ENCODE measurements at regions of chr3 and their contacts with region 1.

Region 1: GRCh38 chr3:11379233-11379823 is 107.1 kb downstream of the ATG7 start:
- DNase-seq: peak in 2 of 5 donors; percentile 7 to 39
- H3K4me3 ChIP-seq: no peak overlapping the region
- H3K4me3 Mint-ChIP-seq: no peak overlapping the region
- H3K27ac ChIP-seq: no peak overlapping the region
- H3K27ac Mint-ChIP-seq: no peak overlapping the region
- H3K4me1 ChIP-seq: no peaks in the 10 kb centered on the region
- H3K4me1 Mint-ChIP-seq: no peaks in the 10 kb centered on the region
- H3K27me3 ChIP-seq: no peaks in the 10 kb centered on the region
- H3K27me3 Mint-ChIP-seq: peaks cover 0 to 2% of the 10 kb centered on the region in 2 donors

Region 2: DNA sequence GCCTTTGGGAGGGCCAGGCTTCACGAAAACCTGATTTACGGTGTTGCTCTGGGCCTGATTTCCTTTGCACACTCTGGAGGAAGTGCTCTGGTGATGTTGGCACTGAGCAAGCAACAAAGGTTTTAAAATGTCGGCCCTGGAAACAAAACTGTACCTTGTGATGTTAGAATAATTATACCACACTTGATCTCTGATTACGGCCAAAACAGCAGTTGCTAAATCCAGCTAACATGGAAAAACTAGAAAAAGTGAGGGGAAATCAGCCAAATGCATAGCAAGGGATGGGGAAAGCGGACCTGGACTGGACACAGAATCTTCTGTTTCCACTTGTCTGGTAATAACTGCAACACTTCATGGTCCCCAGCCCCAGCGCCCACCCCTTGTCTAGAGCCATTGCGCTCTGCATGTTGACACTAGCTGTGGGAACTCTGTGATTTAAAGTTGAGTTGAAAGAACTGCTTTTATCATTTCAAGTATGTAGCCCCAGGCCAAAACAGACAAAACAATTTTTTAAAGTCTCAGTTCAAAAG is 144.3 kb after region 1 on chr3:
- CTCF ChIA-PET with region 1: no interaction called
- POLR2A ChIA-PET with region 1: no interaction called
- DNase-seq: no peak
- H3K4me3 ChIP-seq: no peak overlapping the region
- H3K4me3 Mint-ChIP-seq: no peak overlapping the region
- H3K27ac ChIP-seq: no peak overlapping the region
- H3K27ac Mint-ChIP-seq: peak overlapping the region in 1 of 8 donors; percentile 9
- H3K4me1 ChIP-seq: no peaks in the 10 kb centered on the region
- H3K4me1 Mint-ChIP-seq: no peaks in the 10 kb centered on the region
- H3K27me3 ChIP-seq: no peaks in the 10 kb centered on the region
- H3K27me3 Mint-ChIP-seq: no peaks in the 10 kb centered on the region

Region 3: DNA sequence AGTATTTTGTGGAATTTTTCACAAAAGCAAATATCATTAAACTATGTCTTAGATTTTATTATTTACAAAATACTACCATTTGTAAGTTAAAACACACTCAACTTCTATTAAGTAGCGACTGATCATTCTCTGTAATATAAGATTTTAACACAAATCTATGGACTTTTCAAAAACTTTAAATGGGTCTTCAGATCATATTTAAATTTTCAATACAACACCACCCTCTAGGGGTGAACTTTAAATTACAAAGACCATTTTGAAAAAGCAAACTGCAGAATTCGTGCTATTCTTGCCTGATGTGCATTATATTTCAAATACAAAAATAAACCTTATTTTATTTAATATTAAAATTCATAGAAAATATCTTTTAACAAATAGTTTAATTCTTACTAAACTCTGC is 272.6 kb after region 1 on chr3:
- CTCF ChIA-PET with region 1: interaction called, 32 read pairs
- POLR2A ChIA-PET with region 1: no interaction called
- DNase-seq: peak in 2 of 5 donors; percentile 26 to 41
- H3K4me3 ChIP-seq: no peak overlapping the region
- H3K4me3 Mint-ChIP-seq: no peak overlapping the region
- H3K27ac ChIP-seq: no peak overlapping the region
- H3K27ac Mint-ChIP-seq: no peak overlapping the region
- H3K4me1 ChIP-seq: no peaks in the 10 kb centered on the region
- H3K4me1 Mint-ChIP-seq: peaks cover 5 to 20% (median 8%) of the 10 kb centered on the region in 3 donors
- H3K27me3 ChIP-seq: no peaks in the 10 kb centered on the region
- H3K27me3 Mint-ChIP-seq: no peaks in the 10 kb centered on the region

Region 4: DNA sequence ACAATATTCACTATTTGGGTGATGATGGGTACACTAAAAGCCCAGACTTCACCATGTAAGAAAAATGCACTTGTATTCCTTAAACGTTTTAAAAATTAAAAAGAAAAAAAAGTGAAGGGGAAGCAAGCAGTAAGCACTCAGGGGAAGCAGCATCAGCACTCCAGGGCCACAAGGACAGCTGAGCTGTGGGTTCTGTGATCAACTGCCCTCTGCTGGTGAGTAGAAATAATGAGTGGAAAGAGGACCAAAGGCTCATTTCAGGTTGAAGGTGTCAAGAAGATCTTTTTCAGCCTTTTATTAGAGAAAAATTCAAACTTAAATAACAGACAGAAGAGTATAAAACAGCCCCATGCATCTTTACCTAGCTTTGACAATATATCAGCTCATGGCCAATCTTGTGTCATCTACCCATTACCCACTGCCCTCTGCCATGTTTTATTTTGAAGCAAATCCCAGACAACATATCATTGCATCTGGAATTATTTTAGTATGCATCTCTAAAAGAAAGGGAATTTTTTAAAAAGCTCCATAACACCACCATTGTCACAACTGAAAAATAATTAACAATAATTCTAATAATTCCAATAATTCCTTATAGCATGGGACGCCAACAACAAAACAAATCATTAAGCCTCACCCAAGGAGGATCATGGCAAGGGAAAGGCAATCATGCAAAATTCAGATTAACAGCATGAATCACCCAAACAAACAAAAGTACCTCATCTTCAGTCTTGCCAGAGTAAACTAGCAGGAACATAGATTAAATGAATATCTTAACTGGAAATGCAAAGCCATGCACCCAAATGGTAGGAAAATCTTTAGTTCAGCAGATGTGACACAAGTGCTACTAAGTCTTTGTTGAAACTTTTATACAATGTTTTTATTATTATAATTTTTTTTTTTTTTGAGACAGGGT is 424.9 kb after region 1 on chr3:
- CTCF ChIA-PET with region 1: interaction called, 17 read pairs
- POLR2A ChIA-PET with region 1: no interaction called
- DNase-seq: peak in 4 of 5 donors; percentile 5 to 55 (median 26)
- H3K4me3 ChIP-seq: no peak overlapping the region
- H3K4me3 Mint-ChIP-seq: no peak overlapping the region
- H3K27ac ChIP-seq: no peak overlapping the region
- H3K27ac Mint-ChIP-seq: peak overlapping the region in 3 of 8 donors; percentile 14 to 55 (median 34)
- H3K4me1 ChIP-seq: no peaks in the 10 kb centered on the region
- H3K4me1 Mint-ChIP-seq: peaks cover 11 to 15% (median 13%) of the 10 kb centered on the region in 3 donors
- H3K27me3 ChIP-seq: no peaks in the 10 kb centered on the region
- H3K27me3 Mint-ChIP-seq: no peaks in the 10 kb centered on the region

Measured in CD8-positive, alpha-beta memory T cell (primary cell).